ENCODE measurements at regions of chr17 and their contacts with region 1.

Region 1: DNA sequence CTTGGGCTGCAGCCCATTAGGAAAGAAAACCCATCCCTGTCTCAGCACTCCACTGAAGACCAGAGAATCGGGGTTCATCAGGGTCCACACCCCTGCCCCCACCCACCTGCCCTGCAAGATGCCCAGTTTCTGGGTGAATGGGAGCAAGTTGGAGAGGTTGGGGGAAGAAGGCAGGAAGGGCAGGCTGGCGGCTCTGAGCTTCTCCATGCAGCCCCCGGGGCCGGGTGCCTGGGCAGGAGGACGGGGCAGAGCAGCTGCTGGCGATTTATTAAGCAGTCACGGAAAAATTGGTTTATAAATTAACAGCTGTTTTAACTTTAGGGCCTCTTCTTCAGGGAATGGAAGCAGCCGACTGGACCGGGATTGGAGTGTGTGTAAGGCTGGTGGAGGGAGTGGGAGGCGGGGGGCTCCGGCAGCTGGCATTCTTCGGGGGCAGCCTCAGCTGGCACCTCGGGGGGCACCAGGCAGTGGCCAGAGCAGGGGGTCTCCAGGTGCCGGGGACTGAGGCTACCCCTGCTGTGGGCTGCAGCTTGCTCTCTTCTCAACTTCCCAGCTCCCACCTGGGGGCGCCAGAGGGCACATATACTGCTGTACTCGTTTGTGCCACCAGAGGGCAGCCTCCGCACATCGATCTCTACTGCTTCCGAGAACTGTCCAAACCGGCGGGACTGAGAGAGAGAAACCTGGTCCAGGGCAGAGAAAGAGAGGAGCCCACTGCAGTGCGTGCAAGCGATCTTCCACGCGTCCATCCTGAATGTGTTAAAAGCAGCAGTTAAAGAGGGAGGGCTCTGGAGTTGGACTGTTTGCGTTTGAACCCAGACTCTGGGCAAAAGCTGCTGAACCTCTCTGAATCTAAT is 5.0 kb upstream of the PPP1R1B start:
- DNase-seq: peak; percentile 92
- H3K4me3 Mint-ChIP-seq: peak overlapping the region; percentile 68
- H3K27ac Mint-ChIP-seq: peak overlapping the region; percentile 67
- H3K4me1 Mint-ChIP-seq: peaks cover 27% of the 10 kb centered on the region
- H3K27me3 Mint-ChIP-seq: peaks cover 20% of the 10 kb centered on the region

Region 2: DNA sequence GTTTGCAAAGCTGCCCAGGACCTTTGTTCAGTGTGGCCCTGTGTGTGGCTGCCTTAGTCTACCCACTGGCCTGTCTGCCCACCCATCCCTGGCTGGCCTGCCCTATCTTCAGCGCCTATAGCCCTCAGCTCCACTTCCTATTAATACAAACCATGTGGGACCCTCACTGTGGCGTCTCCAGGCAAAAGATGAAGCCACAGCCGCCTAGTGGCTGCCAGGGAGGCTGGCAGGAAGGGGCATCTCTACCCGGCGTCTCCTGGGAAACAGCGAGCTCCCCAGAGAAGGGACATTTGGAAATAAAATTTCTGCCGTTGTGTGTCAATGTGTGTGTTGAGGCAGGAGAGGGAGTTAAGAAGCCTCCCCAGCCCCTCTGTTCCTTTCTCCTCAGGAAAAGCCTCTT is 45.6 kb before region 1 on chr17:
- CTCF ChIA-PET with region 1: interaction called, 10 read pairs
- intact Hi-C with region 1: no loop called
- DNase-seq: no peak
- H3K4me3 Mint-ChIP-seq: no peak overlapping the region
- H3K27ac Mint-ChIP-seq: no peak overlapping the region
- H3K4me1 Mint-ChIP-seq: peaks cover 5% of the 10 kb centered on the region
- H3K27me3 Mint-ChIP-seq: peaks cover 10% of the 10 kb centered on the region

Region 3: DNA sequence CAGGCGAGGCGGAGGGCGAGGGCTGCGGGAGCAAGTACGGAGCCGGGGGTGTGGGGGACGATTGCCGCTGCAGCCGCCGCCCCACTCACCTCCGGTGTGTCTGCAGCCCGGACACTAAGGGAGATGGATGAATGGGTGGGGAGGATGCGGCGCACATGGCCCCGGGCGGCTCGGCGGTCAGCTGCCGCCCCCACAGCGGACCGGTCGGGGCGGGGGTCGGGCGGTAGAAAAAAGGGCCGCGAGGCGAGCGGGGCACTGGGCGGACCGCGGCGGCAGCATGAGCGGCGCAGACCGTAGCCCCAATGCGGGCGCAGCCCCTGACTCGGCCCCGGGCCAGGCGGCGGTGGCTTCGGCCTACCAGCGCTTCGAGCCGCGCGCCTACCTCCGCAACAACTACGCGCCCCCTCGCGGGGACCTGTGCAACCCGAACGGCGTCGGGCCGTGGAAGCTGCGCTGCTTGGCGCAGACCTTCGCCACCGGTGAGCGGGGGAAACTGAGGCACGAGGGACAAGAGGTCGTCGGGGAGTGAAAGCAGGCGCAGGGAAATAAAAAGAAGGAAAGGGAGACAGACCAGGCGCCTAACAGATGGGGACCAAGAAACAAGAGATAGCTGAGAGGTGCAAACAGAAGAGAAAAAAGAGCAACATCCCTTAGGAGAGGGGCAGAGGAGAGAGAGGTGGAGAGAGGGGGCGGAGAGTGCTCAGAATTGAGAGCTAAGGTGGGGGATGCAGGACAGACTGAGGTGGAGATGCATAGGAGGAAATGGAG is 46.6 kb after region 1 on chr17 and contains the start of gene PNMT:
- CTCF ChIA-PET with region 1: interaction called, 63 read pairs
- intact Hi-C with region 1: loop called (anchors 1 kb)
- DNase-seq: peak; percentile 77
- H3K4me3 Mint-ChIP-seq: peak within 1 kb of the TSS; percentile 52
- H3K27ac Mint-ChIP-seq: no peak within 1 kb of the TSS
- H3K4me1 Mint-ChIP-seq: peaks cover 14% of the 10 kb centered on the region
- H3K27me3 Mint-ChIP-seq: peaks cover 16% of the 10 kb centered on the region
- total RNA-seq, gene PNMT: not detected

Region 4: GRCh38 chr17:39699818-39700147 is 78.0 kb after region 1 on chr17 and contains the start of gene ERBB2:
- CTCF ChIA-PET with region 1: no interaction called
- intact Hi-C with region 1: no loop called
- DNase-seq: no peak
- H3K4me3 Mint-ChIP-seq: no peak within 1 kb of the TSS
- H3K27ac Mint-ChIP-seq: no peak within 1 kb of the TSS
- H3K4me1 Mint-ChIP-seq: peaks cover 9% of the 10 kb centered on the region
- H3K27me3 Mint-ChIP-seq: peaks cover 25% of the 10 kb centered on the region
- total RNA-seq, gene ERBB2: 6.0 to 6.3 TPM

Region 5: GRCh38 chr17:39730095-39730921 is 108.6 kb after region 1 on chr17 and contains the start of gene MIEN1:
- CTCF ChIA-PET with region 1: interaction called, 9 read pairs
- intact Hi-C with region 1: loop called (anchors 1 kb)
- DNase-seq: peak; percentile 95
- H3K4me3 Mint-ChIP-seq: peak within 1 kb of the TSS; percentile 87
- H3K27ac Mint-ChIP-seq: peak within 1 kb of the TSS; percentile 84
- H3K4me1 Mint-ChIP-seq: peaks cover 14% of the 10 kb centered on the region
- H3K27me3 Mint-ChIP-seq: no peaks in the 10 kb centered on the region
- total RNA-seq, gene MIEN1: 35.2 to 36.5 TPM

Region 6: DNA sequence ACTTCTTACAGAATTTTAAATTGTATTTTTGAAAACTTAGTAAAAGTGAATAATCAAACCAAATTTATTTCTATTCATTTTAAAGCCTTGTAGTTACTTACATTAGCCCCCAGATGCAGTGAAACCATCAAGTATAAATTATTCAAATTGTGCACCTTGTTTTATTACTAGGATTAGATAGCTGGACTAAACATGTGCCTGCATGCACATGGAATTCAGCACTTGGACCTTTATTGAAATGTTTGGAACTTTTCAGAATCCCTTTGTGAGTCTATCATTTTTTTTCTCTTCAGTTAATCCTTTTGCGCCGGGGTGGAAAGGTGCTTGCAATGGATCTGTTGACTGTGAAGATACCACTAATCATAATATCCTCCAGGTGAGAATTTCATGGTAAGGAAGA is 251.0 kb after region 1 on chr17:
- CTCF ChIA-PET with region 1: interaction called, 12 read pairs
- intact Hi-C with region 1: no loop called
- DNase-seq: no peak
- H3K4me3 Mint-ChIP-seq: no peak overlapping the region
- H3K27ac Mint-ChIP-seq: no peak overlapping the region
- H3K4me1 Mint-ChIP-seq: peaks cover 9% of the 10 kb centered on the region
- H3K27me3 Mint-ChIP-seq: no peaks in the 10 kb centered on the region

Region 7: GRCh38 chr17:40026816-40027613 is 405.3 kb after region 1 on chr17:
- CTCF ChIA-PET with region 1: interaction called, 3 read pairs
- intact Hi-C with region 1: loop called (anchors 2 kb)
- DNase-seq: peak; percentile 85
- H3K4me3 Mint-ChIP-seq: no peak overlapping the region
- H3K27ac Mint-ChIP-seq: no peak overlapping the region
- H3K4me1 Mint-ChIP-seq: peaks cover 17% of the 10 kb centered on the region
- H3K27me3 Mint-ChIP-seq: no peaks in the 10 kb centered on the region

Measured in activated naive CD4-positive, alpha-beta T cell treated with anti-CD3 and anti-CD28 coated beads for 36 hours (primary cell).